ENCODE measurements at regions of chr10 and their contacts with region 1.

Region 1: DNA sequence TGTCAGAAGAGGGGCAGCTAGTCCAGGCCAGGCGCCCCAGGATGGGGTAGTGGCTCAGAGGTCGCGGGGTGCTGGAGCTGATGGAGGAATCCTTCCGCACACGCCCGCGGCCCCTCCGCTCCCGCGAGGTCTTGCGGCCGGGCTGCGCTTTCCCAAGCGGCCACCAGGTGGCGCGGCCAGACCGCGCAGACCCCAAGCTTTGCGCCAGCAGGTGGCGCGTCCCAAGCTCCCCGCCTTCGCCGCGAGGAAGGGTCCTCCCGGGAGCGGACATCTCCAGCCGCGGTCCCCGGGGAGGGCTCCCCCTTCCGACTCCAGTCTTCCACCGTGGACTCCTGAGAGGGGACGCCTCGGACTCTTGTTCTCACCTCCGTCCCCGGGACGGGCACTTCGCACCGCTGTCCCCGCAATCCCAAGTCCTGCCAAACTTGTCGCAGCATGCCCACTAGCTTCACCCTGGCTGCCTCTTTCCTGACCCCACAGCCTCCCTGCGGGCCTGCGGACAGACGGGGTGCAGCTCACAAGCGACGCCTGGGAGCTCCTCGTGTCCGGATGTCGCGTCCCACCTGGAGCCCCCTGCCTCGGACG is 19.4 kb downstream of the KCNK18 start:
- DNase-seq: peak in 1 of 2 donors; percentile 18
- ATAC-seq: peak; percentile 69 to 72
- H3K4me3 ChIP-seq: peak overlapping the region; percentile 32 to 59 (median 48)
- H3K27ac ChIP-seq: no peak overlapping the region
- H3K4me1 ChIP-seq: peaks cover 0 to 8% of the 10 kb centered on the region in 2 donors
- H3K27me3 ChIP-seq: peaks cover 23 to 36% (median 31%) of the 10 kb centered on the region in 3 donors
- CTCF ChIP-seq: peak; percentile 85 to 99 (median 96)
- POLR2A ChIP-seq: no peak

Region 2: GRCh38 chr10:117318909-117319308 is 102.2 kb after region 1 on chr10:
- in situ Hi-C with region 1: no loop called
- intact Hi-C with region 1: loop called (anchors 2 kb)
- DNase-seq: no peak
- ATAC-seq: no peak
- H3K4me3 ChIP-seq: no peak overlapping the region
- H3K27ac ChIP-seq: no peak overlapping the region
- H3K4me1 ChIP-seq: no peaks in the 10 kb centered on the region
- H3K27me3 ChIP-seq: no peaks in the 10 kb centered on the region
- CTCF ChIP-seq: no peak
- POLR2A ChIP-seq: no peak

Region 3: DNA sequence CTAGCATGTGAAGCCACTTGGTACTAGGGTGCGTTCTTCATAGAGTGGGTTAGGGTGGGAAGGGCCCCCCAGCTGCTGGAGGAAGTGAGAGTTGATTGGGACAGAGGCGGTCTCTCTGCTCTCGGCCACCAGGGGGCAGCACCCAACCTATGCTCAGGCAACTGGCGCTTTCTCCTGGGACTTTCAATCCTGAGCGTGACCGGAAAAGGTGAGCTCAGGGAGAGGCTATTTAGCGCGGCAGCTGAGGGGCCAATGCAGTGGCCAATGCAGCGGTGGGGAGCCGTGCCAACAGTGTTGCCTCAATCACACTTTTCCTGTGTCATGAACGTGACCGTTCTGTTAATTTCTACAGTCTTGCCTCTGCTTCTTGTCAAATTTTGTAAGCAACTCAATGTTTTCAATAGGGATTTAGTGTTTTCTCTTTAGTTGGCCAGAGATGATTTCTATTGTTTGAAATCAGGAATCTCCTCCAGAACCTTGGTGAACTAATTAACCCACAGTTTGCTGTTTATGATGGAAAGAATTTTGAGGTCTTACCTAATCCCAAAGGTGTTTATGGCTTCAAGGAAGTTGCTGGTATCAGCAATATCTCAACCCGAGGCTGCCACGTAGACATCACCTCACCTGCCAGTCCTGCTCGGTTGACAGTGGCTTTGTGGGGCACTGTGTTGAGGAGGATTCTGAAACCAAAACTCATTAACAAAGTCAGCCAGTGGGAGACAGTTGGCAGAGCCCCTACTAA is 226.4 kb after region 1 on chr10:
- in situ Hi-C with region 1: loop called in 1 of 4 experiments (anchors 25 kb)
- intact Hi-C with region 1: no loop called
- DNase-seq: peak; percentile 70 to 82
- ATAC-seq: peak; percentile 50 to 61
- H3K4me3 ChIP-seq: no peak overlapping the region
- H3K27ac ChIP-seq: peak overlapping the region in 2 of 4 donors; percentile 7 to 42
- H3K4me1 ChIP-seq: peaks cover 0 to 5% of the 10 kb centered on the region in 2 donors
- H3K27me3 ChIP-seq: peaks cover 0 to 4% (median 0%) of the 10 kb centered on the region in 3 donors
- CTCF ChIP-seq: peak; percentile 59 to 82 (median 75)
- POLR2A ChIP-seq: no peak

Region 4: DNA sequence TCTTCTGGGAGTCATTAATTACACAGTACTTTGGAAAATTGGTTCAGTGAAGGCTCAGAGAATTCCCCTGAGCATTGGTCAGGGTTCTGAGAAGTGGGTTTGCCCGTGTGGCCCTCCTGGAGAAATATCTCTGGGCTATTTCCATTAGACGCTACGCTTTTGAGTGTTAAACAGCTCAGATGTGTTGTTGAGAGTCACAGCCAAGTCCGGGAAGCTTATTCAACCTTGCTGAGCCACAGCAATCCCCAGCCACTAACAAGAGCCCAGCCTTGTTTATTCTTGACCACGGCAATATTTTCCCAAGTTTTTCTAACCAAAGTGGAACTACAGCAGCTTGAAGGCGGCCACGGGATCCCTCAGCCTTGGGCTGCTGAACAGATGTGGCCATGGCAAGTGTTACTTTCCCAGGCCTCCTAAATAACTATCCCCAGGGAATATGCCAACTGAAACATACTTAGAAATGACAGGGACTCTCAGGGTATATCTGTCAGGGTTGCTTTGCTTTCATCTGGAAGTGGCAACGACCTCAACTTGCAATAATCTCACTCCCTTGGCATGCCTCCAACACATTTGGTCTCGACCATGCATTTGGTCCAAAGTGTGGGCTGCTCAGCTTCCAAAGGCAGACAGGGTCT is 540.5 kb after region 1 on chr10:
- in situ Hi-C with region 1: no loop called
- intact Hi-C with region 1: no loop called
- DNase-seq: no peak
- ATAC-seq: no peak
- H3K4me3 ChIP-seq: no peak overlapping the region
- H3K27ac ChIP-seq: no peak overlapping the region
- H3K4me1 ChIP-seq: no peaks in the 10 kb centered on the region
- H3K27me3 ChIP-seq: no peaks in the 10 kb centered on the region
- CTCF ChIP-seq: no peak
- POLR2A ChIP-seq: no peak

Region 5: DNA sequence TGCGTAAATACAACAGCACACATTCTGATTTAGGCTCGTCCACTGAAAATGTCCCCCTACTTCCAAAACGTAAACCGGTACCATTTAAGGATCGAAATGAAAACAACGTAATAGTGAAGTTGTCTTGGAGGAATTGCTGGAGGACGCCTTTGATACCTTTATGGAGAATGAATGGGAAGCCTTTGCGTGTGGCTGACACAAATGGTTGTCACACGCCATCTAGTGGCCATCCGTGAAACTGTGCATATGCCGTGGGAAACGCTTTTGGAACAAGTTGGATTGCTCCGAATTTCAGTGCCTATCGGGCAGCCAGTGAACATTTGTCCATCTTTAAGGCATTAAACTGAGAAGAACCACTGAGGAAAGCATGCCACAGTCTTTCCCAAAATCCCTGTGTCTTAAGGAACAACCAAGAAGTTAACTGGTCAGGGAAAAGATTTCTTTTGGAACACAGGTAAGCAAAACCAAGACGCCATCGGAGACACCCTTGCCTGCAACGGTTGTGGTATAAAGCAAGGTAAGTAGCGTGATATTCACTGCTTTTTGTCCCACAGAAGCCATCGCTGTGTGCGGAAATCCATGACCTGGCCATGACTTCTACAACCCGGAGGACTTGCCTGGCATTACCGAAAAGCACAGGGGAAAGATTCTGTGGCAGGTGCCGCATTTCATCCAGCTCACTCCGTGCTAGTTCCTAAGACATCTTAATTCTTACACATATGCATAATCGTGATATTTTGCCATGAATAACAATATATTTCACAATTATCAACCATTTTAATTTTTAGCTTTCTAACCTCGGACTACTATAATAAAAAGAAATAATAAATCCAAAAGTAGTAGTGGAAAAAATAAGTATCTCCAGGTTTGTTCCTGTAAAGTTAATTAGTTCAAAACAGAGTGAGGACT is 1024.8 kb after region 1 on chr10:
- in situ Hi-C with region 1: loop called (anchors 25 kb)
- intact Hi-C with region 1: loop called (anchors 5 kb)
- DNase-seq: peak; percentile 37 to 63
- ATAC-seq: peak; percentile 60 to 87
- H3K4me3 ChIP-seq: no peak overlapping the region
- H3K27ac ChIP-seq: no peak overlapping the region
- H3K4me1 ChIP-seq: no peaks in the 10 kb centered on the region
- H3K27me3 ChIP-seq: peaks cover 25 to 48% (median 47%) of the 10 kb centered on the region in 3 donors
- CTCF ChIP-seq: peak; percentile 71 to 93 (median 83)
- POLR2A ChIP-seq: no peak